WTC11 (cell line): ENCODE measurements at regions of chr13 and their contacts with region 1.

Region 1: GRCh38 chr13:77595166-77595810 is 59.8 kb downstream of the SCEL start:
- DNase-seq: no peak
- ATAC-seq: no peak
- H3K4me3 Mint-ChIP-seq: no peak overlapping the region
- H3K27ac Mint-ChIP-seq: no peak overlapping the region
- H3K4me1 Mint-ChIP-seq: no peaks in the 10 kb centered on the region
- H3K27me3 Mint-ChIP-seq: no peaks in the 10 kb centered on the region
- CTCF ChIP-seq: no peak

Region 2: GRCh38 chr13:77374786-77375185 is 220.5 kb before region 1 on chr13:
- CTCF ChIA-PET with region 1: no interaction called
- POLR2A ChIA-PET with region 1: no interaction called
- DNase-seq: no peak
- ATAC-seq: peak; percentile 71
- H3K4me3 Mint-ChIP-seq: 0 out of 2 replicates have a peak overlapping the region, but pooled peaks have one; percentile 13
- H3K27ac Mint-ChIP-seq: peak overlapping the region; percentile 17
- H3K4me1 Mint-ChIP-seq: peaks cover 34% of the 10 kb centered on the region
- H3K27me3 Mint-ChIP-seq: peaks cover 4% of the 10 kb centered on the region; the same call in 1 of the 2 replicates
- CTCF ChIP-seq: no peak

Region 3: DNA sequence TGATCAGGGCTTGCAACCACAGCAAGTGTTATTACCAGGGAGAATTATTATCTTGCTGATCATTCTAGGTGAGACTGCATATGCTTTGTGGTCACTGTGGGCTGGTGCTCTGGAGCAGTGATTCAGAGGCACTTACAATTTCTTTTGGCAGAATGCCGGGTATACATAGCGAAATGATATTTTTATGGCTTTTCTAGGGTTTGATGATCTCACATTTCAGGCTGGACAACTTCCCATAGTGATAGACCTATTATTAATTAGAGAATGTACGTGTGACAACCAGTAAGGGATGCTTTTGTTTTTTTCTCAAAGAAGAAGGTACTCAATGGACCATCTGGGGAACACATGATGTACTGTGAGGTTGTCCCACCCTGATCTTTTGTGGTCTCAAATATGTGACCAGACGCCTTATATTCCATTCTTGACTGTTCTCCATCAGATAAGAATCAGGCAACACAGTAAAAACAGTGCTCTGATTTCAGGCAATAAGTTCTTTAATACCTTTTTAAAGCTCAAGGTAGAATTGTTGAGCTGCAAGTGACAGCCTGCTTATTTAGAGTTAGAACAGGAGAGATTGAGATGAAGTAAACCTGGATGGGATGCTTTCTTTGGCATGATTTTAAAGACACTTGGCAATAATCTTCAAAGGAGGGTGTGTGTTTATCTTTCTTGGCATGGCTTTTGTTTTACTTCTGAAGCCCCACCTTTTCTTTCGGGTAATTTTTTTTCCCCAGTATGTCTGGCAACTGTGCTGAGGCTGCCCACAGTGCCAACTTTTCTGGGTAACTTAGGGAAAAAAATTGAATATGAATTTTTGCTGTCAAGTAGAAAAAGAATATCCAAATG is 87.1 kb before region 1 on chr13:
- CTCF ChIA-PET with region 1: no interaction called
- POLR2A ChIA-PET with region 1: no interaction called
- DNase-seq: no peak
- ATAC-seq: no peak
- H3K4me3 Mint-ChIP-seq: no peak overlapping the region
- H3K27ac Mint-ChIP-seq: no peak overlapping the region
- H3K4me1 Mint-ChIP-seq: no peaks in the 10 kb centered on the region
- H3K27me3 Mint-ChIP-seq: no peaks in the 10 kb centered on the region
- CTCF ChIP-seq: no peak

Region 4: DNA sequence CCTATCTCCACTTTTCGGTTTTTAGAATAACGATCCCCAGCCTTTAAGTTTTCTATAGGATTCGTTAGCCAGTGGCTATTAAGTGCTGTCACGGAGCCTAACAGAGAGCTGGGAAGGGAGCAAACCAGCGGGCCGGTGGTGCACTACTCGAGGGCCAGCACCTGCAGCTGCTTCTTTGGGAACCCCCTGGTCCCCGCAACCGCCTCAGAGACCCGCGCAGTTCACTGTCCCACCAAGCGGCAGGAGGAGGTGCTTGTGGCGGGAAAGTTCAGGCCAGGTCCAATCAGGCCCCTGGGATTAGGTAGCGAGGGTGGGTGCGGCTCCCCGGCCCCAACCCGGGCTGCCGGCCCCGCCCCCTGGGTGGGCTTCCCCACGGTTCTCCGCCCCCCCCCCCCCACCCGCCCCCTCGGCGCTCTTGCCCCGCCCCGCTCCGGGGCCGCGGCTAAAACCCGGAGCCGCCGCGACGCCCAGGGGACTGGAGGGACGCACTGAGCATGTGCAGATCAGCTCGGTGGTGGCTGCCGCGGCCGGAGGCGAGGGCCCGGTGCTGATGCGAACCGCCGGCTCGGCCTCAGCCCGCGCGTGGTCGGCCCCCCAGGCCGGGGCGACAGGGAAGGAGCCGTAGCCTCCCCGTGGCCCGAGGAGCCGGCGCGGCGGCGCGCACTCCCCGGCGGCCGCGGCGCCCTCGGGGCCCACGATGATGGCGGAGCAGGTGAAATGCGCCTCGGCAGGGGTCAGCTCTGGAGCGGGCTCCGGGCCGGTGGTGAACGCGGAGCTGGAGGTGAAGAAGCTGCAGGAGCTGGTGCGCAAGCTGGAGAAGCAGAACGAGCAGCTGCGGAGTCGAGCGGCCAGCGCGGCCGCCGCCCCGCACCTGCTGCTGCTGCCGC is 102.2 kb after region 1 on chr13 and contains the start of gene SLAIN1:
- CTCF ChIA-PET with region 1: interaction called, 12 read pairs
- POLR2A ChIA-PET with region 1: interaction called, 4 read pairs
- DNase-seq: peak; percentile 90
- ATAC-seq: peak; percentile 95
- H3K4me3 Mint-ChIP-seq: peak within 1 kb of the TSS; percentile 99
- H3K27ac Mint-ChIP-seq: peak within 1 kb of the TSS; percentile 91
- H3K4me1 Mint-ChIP-seq: peaks cover 39% of the 10 kb centered on the region
- H3K27me3 Mint-ChIP-seq: peaks cover 7% of the 10 kb centered on the region
- CTCF ChIP-seq: no peak
- total RNA-seq, gene SLAIN1: 29.7 to 33.1 TPM (median 32.0 TPM) in 3 replicates

Region 5: GRCh38 chr13:77751513-77752456 is 156.5 kb after region 1 on chr13:
- CTCF ChIA-PET with region 1: interaction called, 21 read pairs
- POLR2A ChIA-PET with region 1: no interaction called
- DNase-seq: peak; percentile 22
- ATAC-seq: peak; percentile 93
- H3K4me3 Mint-ChIP-seq: no peak overlapping the region
- H3K27ac Mint-ChIP-seq: peak overlapping the region; percentile 93
- H3K4me1 Mint-ChIP-seq: peaks cover 7% of the 10 kb centered on the region
- H3K27me3 Mint-ChIP-seq: no peaks in the 10 kb centered on the region
- CTCF ChIP-seq: peak; percentile 53

Region 6: GRCh38 chr13:77800219-77800618 is 204.9 kb after region 1 on chr13:
- CTCF ChIA-PET with region 1: no interaction called
- POLR2A ChIA-PET with region 1: no interaction called
- DNase-seq: no peak
- ATAC-seq: no peak
- H3K4me3 Mint-ChIP-seq: no peak overlapping the region
- H3K27ac Mint-ChIP-seq: no peak overlapping the region
- H3K4me1 Mint-ChIP-seq: no peaks in the 10 kb centered on the region
- H3K27me3 Mint-ChIP-seq: no peaks in the 10 kb centered on the region
- CTCF ChIP-seq: no peak